ENCODE measurements at regions of chr19 and their contacts with region 1.

Region 1: GRCh38 chr19:56170261-56170660 is 5.5 kb upstream of the GALP start:
- DNase-seq: no peak
- H3K4me3 ChIP-seq: no peak overlapping the region
- H3K27ac ChIP-seq: no peak overlapping the region
- H3K4me1 ChIP-seq: peaks cover 0 to 5% (median 2%) of the 10 kb centered on the region in 4 donors
- H3K27me3 ChIP-seq: peaks cover 0 to 23% (median 0%) of the 10 kb centered on the region in 4 donors
- CTCF ChIP-seq: no peak
- EP300 ChIP-seq: no peak
- POLR2A ChIP-seq: no peak

Region 2: DNA sequence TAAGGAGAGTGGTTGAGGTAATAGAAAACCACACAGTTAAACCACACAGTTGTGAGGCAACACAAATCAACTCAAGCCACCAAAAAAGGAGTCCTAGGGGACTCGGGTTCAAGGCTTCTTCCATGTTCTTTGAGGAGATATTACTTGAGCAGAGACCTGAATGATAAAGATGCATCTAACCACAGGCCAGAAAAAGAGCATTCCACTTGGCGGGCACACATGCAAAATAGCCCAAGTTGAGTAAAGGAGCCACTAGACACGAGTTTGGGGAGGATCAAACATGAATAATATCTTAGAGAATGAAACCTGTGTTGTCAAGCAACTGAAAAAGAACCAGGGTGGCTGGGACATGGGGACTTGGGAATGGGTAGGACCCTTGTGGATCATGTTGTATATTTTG is 303.7 kb before region 1 on chr19:
- intact Hi-C with region 1: no loop called
- DNase-seq: no peak
- H3K4me3 ChIP-seq: no peak overlapping the region
- H3K27ac ChIP-seq: no peak overlapping the region
- H3K4me1 ChIP-seq: no peaks in the 10 kb centered on the region
- H3K27me3 ChIP-seq: peaks cover 0 to 8% (median 0%) of the 10 kb centered on the region in 4 donors
- CTCF ChIP-seq: no peak
- EP300 ChIP-seq: no peak
- POLR2A ChIP-seq: no peak

Region 3: DNA sequence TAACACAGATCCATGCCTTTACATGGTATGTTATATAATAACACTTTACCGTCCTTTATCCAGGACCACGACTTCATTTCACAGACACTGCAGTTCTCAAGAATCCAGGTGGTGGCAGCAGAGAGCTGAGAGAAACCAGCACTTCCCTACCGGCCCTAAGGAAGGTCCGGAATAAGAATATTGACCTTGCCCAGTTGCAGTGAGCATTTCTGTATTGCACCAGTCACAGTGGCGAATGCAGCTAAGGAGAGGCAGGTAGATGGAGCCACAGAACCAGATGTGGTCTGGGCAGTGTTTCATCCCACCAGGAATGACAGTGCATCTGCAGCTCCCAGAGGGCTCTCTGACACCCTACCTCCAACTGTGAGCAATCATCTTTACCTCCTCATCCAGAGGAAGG is 93.8 kb before region 1 on chr19:
- intact Hi-C with region 1: loop called (anchors 1 kb)
- DNase-seq: no peak
- H3K4me3 ChIP-seq: no peak overlapping the region
- H3K27ac ChIP-seq: no peak overlapping the region
- H3K4me1 ChIP-seq: peaks cover 9 to 11% (median 11%) of the 10 kb centered on the region in 4 donors
- H3K27me3 ChIP-seq: no peaks in the 10 kb centered on the region
- CTCF ChIP-seq: peak; percentile 85 to 92 (median 85)
- EP300 ChIP-seq: no peak
- POLR2A ChIP-seq: no peak

Region 4: DNA sequence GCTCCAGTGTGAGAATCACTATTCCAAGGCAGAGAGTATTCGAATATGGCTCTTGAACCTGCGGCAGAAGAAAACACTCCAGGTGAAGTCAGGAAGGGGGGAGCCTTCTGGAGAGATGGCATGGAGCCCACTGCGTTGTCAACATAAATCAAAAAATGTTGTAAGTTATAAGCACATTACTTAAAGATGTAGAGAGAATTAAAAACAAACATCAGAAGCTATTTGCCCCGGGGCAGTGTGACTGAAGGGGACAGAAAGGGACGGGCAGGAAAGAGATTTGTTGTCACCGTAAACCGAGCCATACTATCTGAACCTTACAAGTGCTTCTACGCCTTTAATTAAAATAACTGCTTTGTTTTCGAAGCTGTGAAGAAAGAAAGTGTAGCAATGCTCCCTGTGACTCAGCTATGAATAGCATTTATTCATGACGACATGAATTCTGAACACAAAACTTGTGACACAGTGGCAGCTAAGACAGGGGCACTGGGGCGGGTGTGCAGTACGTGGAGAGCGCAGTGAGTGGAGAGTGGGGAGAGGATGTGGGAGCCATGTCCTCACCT is 79.2 kb before region 1 on chr19:
- intact Hi-C with region 1: loop called (anchors 5 kb)
- DNase-seq: no peak
- H3K4me3 ChIP-seq: no peak overlapping the region
- H3K27ac ChIP-seq: peak overlapping the region; percentile 46 to 62 (median 52)
- H3K4me1 ChIP-seq: peaks cover 22 to 41% (median 34%) of the 10 kb centered on the region in 4 donors
- H3K27me3 ChIP-seq: no peaks in the 10 kb centered on the region
- CTCF ChIP-seq: no peak
- EP300 ChIP-seq: no peak
- POLR2A ChIP-seq: no peak

Region 5: DNA sequence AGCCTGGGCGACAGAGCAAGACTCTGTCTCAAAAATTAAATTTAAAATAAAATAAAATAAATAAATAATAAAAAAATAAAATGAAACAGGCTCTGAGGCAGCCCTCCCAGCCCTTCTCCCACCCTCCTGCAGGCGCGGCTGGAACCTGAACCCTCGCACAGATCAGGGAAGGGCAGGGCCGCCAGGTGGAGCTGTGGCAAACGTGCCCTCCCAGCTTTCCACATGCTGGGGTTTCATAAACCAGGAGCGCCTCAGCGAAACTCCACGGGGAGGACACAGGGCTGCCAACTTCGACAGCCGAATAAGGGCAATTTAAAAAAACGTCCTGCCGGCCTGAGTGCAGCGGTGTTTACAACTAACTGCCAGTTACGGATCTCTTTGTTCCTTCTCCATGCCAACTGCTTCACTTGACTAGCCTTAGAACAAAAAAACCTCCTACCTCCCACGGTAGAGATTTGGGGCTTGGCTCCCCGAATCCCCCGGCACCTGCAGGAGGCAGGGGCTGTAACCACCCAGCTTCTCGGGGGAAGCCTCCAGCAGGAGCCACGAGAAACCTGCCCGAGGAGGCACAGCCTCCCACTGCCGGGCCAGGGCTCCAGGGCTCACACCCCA is 65.1 kb before region 1 on chr19:
- intact Hi-C with region 1: loop called (anchors 2 kb)
- DNase-seq: peak; percentile 93
- H3K4me3 ChIP-seq: peak overlapping the region; percentile 33 to 39 (median 36)
- H3K27ac ChIP-seq: peak overlapping the region; percentile 81 to 87 (median 84)
- H3K4me1 ChIP-seq: peaks cover 61 to 75% (median 69%) of the 10 kb centered on the region in 4 donors
- H3K27me3 ChIP-seq: no peaks in the 10 kb centered on the region
- CTCF ChIP-seq: peak; percentile 85 to 93 (median 89)
- EP300 ChIP-seq: no peak
- POLR2A ChIP-seq: no peak

Region 6: GRCh38 chr19:56217039-56217949 is 47.0 kb after region 1 on chr19:
- intact Hi-C with region 1: no loop called
- DNase-seq: no peak
- H3K4me3 ChIP-seq: peak overlapping the region; percentile 42 to 52 (median 46)
- H3K27ac ChIP-seq: no peak overlapping the region
- H3K4me1 ChIP-seq: peaks cover 6 to 11% (median 9%) of the 10 kb centered on the region in 4 donors
- H3K27me3 ChIP-seq: peaks cover 0 to 27% (median 4%) of the 10 kb centered on the region in 4 donors
- CTCF ChIP-seq: no peak
- EP300 ChIP-seq: no peak
- POLR2A ChIP-seq: no peak